Pancreas (tissue), 10 donors: ENCODE measurements at regions of chr15 and their contacts with region 1.

Region 1: GRCh38 chr15:88834211-88834812 is 31.1 kb downstream of the ACAN start:
- DNase-seq: peak in 3 of 6 donors; percentile 3 to 70 (median 37)
- ATAC-seq: peak; percentile 31 to 77 (median 73)
- H3K4me3 ChIP-seq: no peak overlapping the region
- H3K27ac ChIP-seq: no peak overlapping the region
- H3K4me1 ChIP-seq: no peaks in the 10 kb centered on the region
- H3K27me3 ChIP-seq: no peaks in the 10 kb centered on the region
- CTCF ChIP-seq: peak in 2 of 4 donors; percentile 10 to 29

Region 2: GRCh38 chr15:88657326-88658069 is 176.8 kb before region 1 on chr15:
- intact Hi-C with region 1: loop called in 2 of 3 experiments (anchors 5 kb)
- DNase-seq: peak in 4 of 6 donors; percentile 27 to 80 (median 54)
- ATAC-seq: peak; percentile 49 to 75 (median 70)
- H3K4me3 ChIP-seq: no peak overlapping the region
- H3K27ac ChIP-seq: no peak overlapping the region
- H3K4me1 ChIP-seq: peaks cover 0 to 10% (median 2%) of the 10 kb centered on the region in 3 donors
- H3K27me3 ChIP-seq: no peaks in the 10 kb centered on the region
- CTCF ChIP-seq: peak; percentile 29 to 69 (median 62)